BJ (cell line): ENCODE measurements at regions of chr1 and their contacts with region 1.

Region 1: DNA sequence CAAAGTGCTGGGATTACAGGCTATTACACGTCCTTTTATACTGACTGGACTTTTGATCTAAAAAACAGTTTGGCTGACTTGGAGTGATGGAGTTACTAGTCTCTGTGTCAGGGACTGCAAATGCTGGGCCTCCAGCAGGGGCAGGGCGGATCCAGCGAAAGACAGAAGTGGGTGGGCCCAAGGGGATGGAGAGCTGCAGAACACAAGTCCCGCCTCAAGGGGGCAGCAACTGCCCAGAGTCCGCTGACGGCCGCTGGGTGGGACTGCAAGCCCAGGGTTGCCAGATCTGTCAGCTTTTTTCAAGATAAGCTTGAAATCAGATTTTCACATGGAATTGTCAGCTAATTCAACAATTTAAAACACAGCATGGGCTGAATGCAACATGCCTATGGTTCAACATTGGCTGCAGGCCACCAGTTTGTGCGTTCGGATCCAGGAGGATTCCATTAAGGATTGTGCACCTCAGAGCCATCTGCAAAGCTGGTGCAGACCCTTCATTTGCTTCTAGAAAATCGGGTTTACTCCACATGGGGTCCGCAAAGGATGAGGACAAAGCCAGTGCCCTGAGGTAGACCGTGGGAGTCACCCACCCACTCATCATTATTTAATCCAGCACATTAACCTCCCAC is 10.7 kb downstream of the STMN1 start:
- DNase-seq: peak; percentile 58
- H3K4me3 ChIP-seq: no peak overlapping the region
- H3K27me3 ChIP-seq: no peaks in the 10 kb centered on the region
- CTCF ChIP-seq: peak; percentile 98

Region 2: DNA sequence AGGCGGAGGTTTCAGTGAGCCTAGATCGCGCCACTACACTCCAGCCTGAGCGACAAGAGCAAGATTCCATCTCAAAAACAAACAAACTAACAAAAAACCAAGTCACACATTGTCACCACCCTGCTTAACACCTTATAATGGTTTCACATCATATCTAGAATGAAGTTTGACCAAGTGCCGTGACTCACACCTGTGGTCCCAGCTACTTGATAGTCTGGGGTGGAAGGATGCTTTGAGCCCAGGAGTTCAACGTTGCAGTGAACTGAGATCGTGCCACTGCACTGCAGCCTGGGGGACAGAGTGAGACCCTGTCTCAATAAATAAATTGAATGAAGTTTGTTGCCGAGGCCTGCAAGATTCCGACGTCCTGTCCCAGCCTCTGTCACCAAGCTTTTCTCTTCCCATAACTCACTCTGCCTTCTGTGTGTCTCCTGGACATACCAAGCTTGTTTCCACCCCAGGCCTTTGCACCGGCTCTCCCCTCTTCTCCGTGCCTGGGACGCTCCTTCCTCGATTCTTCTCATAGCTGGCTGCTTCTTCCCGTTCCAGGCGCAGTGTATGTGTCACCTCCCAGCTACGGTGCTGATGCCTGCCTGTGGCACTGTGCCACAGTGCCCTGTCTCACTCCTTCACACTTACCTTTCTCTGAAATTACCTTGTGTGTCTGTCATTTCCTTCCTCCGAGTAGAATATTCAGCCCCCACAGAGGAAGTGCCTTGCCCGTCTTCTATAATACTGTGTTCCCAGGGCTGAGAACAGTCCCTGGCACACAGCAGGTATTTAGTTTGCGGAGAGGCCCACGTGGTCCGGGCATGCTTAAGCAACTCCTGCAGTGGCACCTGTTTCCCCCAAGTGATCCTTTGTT is 99.3 kb before region 1 on chr1:
- CTCF ChIA-PET with region 1: no interaction called
- POLR2A ChIA-PET with region 1: no interaction called
- DNase-seq: no peak
- H3K4me3 ChIP-seq: no peak overlapping the region
- H3K27me3 ChIP-seq: peaks cover 3% of the 10 kb centered on the region
- CTCF ChIP-seq: no peak

Region 3: GRCh38 chr1:25914074-25914995 is 18.9 kb after region 1 on chr1:
- CTCF ChIA-PET with region 1: interaction called, 10 read pairs
- POLR2A ChIA-PET with region 1: interaction called, 5 read pairs
- DNase-seq: no peak
- H3K4me3 ChIP-seq: no peak overlapping the region
- H3K27me3 ChIP-seq: no peaks in the 10 kb centered on the region
- CTCF ChIP-seq: no peak

Region 4: GRCh38 chr1:25990702-25991395 is 95.4 kb after region 1 on chr1:
- CTCF ChIA-PET with region 1: interaction called, 308 read pairs
- POLR2A ChIA-PET with region 1: no interaction called
- DNase-seq: no peak
- H3K4me3 ChIP-seq: no peak overlapping the region
- H3K27me3 ChIP-seq: no peaks in the 10 kb centered on the region
- CTCF ChIP-seq: no peak

Region 5: DNA sequence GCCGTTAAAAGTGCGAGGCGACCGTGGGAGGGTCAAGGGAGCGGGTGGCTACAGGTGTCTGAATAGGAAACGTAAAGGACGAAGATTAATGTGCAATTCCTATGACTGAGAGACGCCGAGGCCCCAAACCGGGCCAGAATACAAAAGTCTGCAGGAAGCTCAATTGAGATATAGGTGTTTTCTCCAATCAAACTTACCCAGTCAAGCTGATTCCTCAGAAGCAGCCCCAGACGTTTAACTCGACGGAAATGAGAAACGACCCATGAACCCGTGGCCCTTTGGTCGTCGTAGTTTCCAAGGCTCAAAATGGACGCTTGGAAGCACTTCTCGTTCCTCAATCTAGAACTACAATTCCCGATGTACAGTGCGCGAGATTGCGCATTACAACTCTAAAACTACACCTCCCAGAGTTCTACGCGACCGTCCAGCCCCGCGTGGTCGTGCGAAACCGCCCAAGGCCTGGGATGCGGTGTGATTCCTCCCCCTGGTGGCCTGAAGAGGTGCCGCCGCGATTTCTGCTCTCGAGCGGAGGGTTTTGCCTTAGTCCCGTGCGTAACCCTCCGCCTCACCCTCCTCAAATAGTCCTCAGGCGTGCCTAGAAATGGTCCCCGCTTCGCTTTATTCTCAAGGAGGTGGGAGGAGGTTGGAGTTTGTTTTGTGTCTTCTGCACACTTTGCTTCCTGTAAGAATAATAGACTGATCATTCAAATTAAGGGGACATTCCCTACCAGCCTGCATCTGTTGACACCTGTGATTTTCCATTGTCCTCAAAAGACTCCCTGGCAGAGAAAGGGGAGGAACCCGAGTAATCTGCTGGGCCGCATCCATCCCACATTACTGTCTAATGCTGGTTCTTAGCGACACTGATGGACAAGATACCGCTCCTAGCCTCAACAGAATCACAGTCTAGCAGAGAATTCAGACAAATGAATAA is 102.6 kb after region 1 on chr1 and contains the start of gene PAFAH2:
- CTCF ChIA-PET with region 1: interaction called, 308 read pairs
- POLR2A ChIA-PET with region 1: interaction called, 22 read pairs
- DNase-seq: peak; percentile 96
- H3K4me3 ChIP-seq: peak within 1 kb of the TSS; percentile 49
- H3K27me3 ChIP-seq: no peaks in the 10 kb centered on the region
- CTCF ChIP-seq: peak; percentile 98
- polyA plus RNA-seq, gene PAFAH2: 11.9 and 13.2 TPM in 2 replicates

Region 6: DNA sequence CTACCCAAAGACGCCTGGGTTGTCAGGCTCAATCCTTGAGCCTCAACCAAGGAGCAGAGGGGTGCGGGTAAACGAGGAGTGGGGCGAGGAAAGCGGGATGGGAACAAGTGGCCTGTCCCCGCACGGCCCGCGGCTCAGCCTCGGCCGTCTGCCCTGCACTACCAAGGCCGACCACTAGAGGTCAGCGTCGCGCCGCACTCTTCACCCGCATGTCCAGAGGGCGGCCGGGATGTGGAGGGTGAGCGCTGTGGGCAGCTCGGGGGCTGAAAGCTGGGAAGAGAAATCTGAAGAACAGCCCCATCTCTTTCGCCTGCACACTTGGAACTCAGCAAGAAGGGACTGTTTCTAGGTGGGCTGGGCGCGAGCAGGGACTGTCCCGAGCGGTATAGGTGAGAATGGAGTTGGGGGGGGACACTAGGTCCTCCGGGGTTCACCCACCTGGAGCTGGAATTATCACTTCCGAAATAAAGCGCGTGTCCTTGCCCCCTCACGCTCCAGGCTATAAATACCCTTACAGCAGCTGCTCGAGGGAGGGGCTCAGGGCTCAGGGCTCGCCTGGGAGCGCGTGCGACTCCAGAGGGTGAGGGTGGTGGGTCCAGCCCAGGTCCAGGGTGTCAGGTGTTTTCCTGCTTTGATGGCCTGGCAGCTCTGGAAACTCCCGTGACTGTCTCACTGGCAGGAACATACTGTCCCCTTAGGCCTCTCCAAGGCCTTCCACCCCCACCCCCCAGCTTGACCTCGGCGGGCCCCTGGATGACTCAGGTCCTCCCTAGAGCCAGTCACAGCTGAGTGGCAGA is 140.7 kb after region 1 on chr1:
- CTCF ChIA-PET with region 1: interaction called, 13 read pairs
- POLR2A ChIA-PET with region 1: no interaction called
- DNase-seq: no peak
- H3K4me3 ChIP-seq: peak overlapping the region; percentile 90
- H3K27me3 ChIP-seq: peaks cover 4% of the 10 kb centered on the region; the same call in 1 of the 2 replicates
- CTCF ChIP-seq: peak; percentile 99

Region 7: DNA sequence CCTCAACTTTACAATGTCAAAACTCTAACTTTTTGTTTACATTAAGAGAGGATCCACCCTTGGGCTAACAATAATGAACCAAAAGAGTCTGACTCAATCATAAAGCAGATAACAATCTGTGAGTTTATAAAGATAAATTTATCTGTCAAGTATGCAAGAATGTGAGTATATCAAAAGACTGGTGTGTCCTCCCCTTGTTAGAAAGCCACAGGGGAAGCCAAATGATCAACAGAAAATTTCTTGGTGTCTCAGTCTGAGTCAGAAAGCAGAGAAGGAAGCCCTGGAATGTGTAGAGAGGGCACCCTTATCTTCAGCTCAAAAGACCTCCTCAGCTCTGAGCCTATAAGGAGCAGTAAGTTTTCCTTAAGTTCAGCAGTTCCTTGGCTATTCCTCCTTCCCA is 202.2 kb after region 1 on chr1:
- CTCF ChIA-PET with region 1: interaction called, 11 read pairs
- POLR2A ChIA-PET with region 1: no interaction called
- DNase-seq: no peak
- H3K4me3 ChIP-seq: no peak overlapping the region
- H3K27me3 ChIP-seq: peaks cover 8% of the 10 kb centered on the region
- CTCF ChIP-seq: no peak